ENCODE measurements at regions of chr1 and their contacts with region 1.

Region 1: DNA sequence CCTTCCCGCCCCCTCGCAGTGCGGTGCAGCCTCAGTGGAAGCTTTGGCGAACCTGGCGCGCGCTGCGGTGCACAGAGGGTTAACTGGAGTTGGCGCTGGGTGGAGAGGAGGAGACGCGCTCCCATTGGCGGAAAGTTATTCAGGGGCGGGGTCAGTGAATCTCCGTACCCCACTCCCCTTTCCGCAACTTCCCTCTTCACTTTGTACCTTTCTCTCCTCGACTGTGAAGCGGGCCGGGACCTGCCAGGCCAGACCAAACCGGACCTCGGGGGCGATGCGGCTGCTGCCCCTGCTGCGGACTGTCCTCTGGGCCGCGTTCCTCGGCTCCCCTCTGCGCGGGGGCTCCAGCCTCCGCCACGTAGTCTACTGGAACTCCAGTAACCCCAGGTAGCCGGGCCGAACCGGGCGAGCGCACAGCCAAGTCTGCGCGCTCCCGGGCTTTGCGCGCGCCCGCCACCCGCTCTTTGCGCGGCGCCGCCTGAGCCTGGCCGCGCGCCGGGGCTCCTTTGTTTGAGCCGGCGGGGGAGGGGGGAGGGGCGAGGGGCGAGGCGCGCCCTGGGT is at the start of gene EFNA4:
- DNase-seq: peak; percentile 94
- ATAC-seq: peak; percentile 84
- H3K4me3 ChIP-seq: peak within 1 kb of the TSS; percentile 68 to 78 (median 74)
- H3K4me3 Mint-ChIP-seq: peak within 1 kb of the TSS; percentile 94
- H3K27ac ChIP-seq: peak within 1 kb of the TSS; percentile 25 to 55
- H3K27ac Mint-ChIP-seq: peak within 1 kb of the TSS; percentile 87
- H3K4me1 ChIP-seq: peaks cover 27 to 50% of the 10 kb centered on the region in 2 donors
- H3K4me1 Mint-ChIP-seq: peaks cover 47% of the 10 kb centered on the region
- H3K27me3 ChIP-seq: peaks cover 0 to 3% (median 0%) of the 10 kb centered on the region in 4 experiments
- H3K27me3 Mint-ChIP-seq: no peaks in the 10 kb centered on the region
- CTCF ChIP-seq: no peak
- total RNA-seq, gene EFNA4: 8.4 and 9.9 TPM in 2 replicates

Region 2: DNA sequence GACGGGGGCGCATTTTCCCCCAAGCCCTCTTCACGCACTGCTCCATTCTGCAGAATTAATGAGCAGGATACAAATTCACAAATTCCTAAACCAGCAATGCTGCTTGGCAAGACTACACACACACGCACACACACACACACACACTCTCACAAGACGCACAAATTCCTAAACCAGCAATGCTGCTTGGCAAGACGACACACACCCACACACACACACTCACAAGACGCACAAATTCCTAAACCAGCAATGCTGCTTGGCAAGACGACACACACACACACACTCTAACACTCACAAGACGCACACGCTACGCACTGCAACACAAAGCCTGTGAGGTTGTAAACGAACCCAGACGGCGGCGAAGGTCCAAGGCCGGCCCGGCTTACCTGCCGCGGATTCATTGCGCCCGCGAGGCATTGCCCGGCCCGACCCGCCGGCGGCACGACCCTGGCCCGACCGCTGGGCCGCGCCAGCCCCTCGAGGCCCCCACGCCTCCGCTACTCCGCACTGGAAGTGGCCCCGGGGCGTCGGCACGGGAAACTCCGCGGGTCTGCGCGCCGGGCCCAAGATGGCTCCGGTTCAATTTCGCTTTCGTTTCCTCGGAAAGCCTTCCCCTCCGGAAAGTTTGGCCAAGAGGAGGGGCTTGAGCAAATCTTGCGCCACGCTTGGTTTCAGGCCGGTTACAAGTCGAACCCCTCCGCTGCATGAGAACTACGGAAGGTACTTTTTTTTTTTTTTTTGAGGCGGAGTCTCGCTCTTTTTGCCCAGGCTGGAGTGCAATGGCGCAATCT is 455.8 kb before region 1 on chr1 and contains the start of gene ADAR:
- CTCF ChIA-PET with region 1: no interaction called
- POLR2A ChIA-PET with region 1: no interaction called
- intact Hi-C with region 1: loop called (anchors 5 kb)
- DNase-seq: peak; percentile 96
- ATAC-seq: peak; percentile 92
- H3K4me3 ChIP-seq: peak within 1 kb of the TSS; percentile 83 to 96 (median 93)
- H3K4me3 Mint-ChIP-seq: peak within 1 kb of the TSS; percentile 98
- H3K27ac ChIP-seq: peak within 1 kb of the TSS; percentile 86 to 97
- H3K27ac Mint-ChIP-seq: peak within 1 kb of the TSS; percentile 96
- H3K4me1 ChIP-seq: peaks cover 50 to 60% of the 10 kb centered on the region in 2 donors
- H3K4me1 Mint-ChIP-seq: peaks cover 61% of the 10 kb centered on the region
- H3K27me3 ChIP-seq: no peaks in the 10 kb centered on the region
- H3K27me3 Mint-ChIP-seq: no peaks in the 10 kb centered on the region
- CTCF ChIP-seq: no peak
- total RNA-seq, gene ADAR: 221 and 241 TPM in 2 replicates

Region 3: GRCh38 chr1:154878371-154879022 is 185.1 kb before region 1 on chr1:
- CTCF ChIA-PET with region 1: interaction called, 7 read pairs
- POLR2A ChIA-PET with region 1: no interaction called
- intact Hi-C with region 1: loop called (anchors 1 kb)
- DNase-seq: peak; percentile 78
- ATAC-seq: peak; percentile 93
- H3K4me3 ChIP-seq: no peak overlapping the region
- H3K4me3 Mint-ChIP-seq: no peak overlapping the region
- H3K27ac ChIP-seq: no peak overlapping the region
- H3K27ac Mint-ChIP-seq: no peak overlapping the region
- H3K4me1 ChIP-seq: peaks cover 0 to 2% of the 10 kb centered on the region in 2 donors
- H3K4me1 Mint-ChIP-seq: no peaks in the 10 kb centered on the region
- H3K27me3 ChIP-seq: no peaks in the 10 kb centered on the region
- H3K27me3 Mint-ChIP-seq: no peaks in the 10 kb centered on the region
- CTCF ChIP-seq: peak; percentile 89

Region 4: DNA sequence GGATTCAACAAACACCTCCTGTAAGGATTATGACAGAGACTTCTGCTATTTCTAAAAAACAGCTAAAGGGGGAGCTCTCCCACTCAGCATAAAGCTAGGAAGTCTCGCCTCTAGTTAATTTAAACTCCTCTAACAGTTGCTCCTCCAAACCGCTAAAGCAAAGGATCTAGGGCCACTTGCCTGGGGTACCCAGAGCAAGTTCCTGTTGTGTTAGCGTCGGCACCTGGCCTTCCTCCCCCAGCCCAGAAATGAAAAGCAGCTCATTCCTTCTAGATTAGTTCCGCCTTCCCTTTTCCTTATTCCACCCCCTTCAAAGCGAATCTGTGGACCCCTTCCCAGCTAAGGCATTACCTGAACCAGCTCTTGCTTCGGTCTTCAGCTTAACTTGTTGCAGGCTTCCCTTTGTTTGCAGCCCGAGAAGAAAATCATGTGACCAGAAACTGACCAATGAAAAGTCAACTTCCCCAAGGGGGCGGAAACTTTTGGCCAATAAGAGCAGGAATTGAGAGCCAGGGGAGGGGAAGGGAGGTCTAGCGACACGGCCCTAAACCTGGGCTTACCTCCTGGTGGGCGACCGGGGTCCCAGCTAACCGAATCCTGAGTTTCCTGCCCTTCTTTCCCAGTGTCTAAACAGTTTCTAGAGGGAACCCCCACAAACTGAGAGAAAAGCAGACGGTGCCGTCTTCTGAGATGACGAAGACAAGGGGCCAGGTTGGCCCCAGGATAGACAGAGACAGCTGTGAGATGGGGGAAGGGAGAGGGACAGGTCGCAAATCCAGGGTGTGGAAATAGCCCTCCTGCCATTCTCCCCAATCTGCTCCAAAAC is 107.7 kb before region 1 on chr1 and contains the start of gene PBXIP1:
- CTCF ChIA-PET with region 1: interaction called, 13 read pairs
- POLR2A ChIA-PET with region 1: interaction called, 3 read pairs
- intact Hi-C with region 1: loop called (anchors 2 kb)
- DNase-seq: peak; percentile 94
- ATAC-seq: peak; percentile 68
- H3K4me3 ChIP-seq: peak within 1 kb of the TSS; percentile 71 to 97 (median 83)
- H3K4me3 Mint-ChIP-seq: peak within 1 kb of the TSS; percentile 92
- H3K27ac ChIP-seq: peak within 1 kb of the TSS; percentile 99
- H3K27ac Mint-ChIP-seq: peak within 1 kb of the TSS; percentile 96
- H3K4me1 ChIP-seq: peaks cover 59 to 68% of the 10 kb centered on the region in 2 donors
- H3K4me1 Mint-ChIP-seq: peaks cover 72% of the 10 kb centered on the region
- H3K27me3 ChIP-seq: no peaks in the 10 kb centered on the region
- H3K27me3 Mint-ChIP-seq: no peaks in the 10 kb centered on the region
- CTCF ChIP-seq: peak; percentile 39
- total RNA-seq, gene PBXIP1: 212 and 219 TPM in 2 replicates

Region 5: DNA sequence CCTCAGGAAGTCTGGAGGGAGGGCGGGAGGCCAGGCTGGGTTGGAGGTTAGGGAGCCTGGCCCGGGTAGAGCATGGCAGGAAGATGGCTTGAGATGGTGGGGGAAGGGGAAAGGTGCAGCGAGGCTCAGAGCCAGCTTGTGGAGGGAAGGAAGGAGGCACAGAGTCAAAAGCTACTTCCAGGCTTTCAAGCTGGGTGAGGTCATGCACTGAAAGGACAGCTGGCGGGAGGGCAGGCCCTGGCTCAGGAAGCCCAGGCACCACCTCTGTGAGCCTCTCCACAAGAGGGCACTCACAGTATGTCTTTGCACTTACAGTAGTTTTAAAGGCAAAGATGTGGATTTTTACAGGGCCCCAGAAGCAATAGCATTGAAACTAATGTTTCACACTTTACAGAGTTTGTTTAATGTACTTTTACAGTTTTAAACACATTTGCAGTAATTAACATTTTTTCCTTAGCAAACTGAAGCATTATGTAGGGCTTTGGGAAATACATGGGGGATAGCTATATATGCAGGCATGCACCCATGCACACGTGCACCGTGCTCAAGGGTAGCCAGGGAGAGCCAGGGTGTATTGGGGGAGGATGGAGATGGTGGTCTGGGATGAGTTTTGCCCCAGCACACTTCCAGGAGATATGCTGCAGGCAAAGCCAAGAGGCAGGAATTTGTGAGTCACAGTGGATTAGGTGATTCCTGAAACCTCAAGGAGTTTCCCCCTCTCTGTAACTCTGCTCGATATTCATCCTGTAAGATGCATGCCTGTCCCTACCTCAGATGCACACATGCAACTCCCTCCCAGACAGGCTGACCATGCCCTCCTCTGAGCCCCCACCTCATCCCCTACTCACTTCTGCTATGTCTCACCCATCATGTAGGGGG is 18.6 kb before region 1 on chr1:
- CTCF ChIA-PET with region 1: interaction called, 370 read pairs
- POLR2A ChIA-PET with region 1: interaction called, 8 read pairs
- intact Hi-C with region 1: loop called (anchors 1 kb)
- DNase-seq: peak; percentile 76
- ATAC-seq: peak; percentile 92
- H3K4me3 ChIP-seq: no peak overlapping the region
- H3K4me3 Mint-ChIP-seq: peak overlapping the region; percentile 30
- H3K27ac ChIP-seq: no peak overlapping the region
- H3K27ac Mint-ChIP-seq: peak overlapping the region; percentile 54
- H3K4me1 ChIP-seq: peaks cover 0 to under 1% of the 10 kb centered on the region in 2 donors
- H3K4me1 Mint-ChIP-seq: peaks cover 10% of the 10 kb centered on the region
- H3K27me3 ChIP-seq: no peaks in the 10 kb centered on the region
- H3K27me3 Mint-ChIP-seq: peaks cover 3% of the 10 kb centered on the region
- CTCF ChIP-seq: peak; percentile 63

Region 6: GRCh38 chr1:155084722-155085503 is 21.3 kb after region 1 on chr1:
- CTCF ChIA-PET with region 1: interaction called, 184 read pairs
- POLR2A ChIA-PET with region 1: interaction called, 18 read pairs
- intact Hi-C with region 1: loop called (anchors 1 kb)
- DNase-seq: peak; percentile 97
- ATAC-seq: peak; percentile 73
- H3K4me3 ChIP-seq: peak overlapping the region; percentile 48 to 80 (median 76)
- H3K4me3 Mint-ChIP-seq: peak overlapping the region; percentile 91
- H3K27ac ChIP-seq: peak overlapping the region; percentile 77 to 79
- H3K27ac Mint-ChIP-seq: peak overlapping the region; percentile 93
- H3K4me1 ChIP-seq: peaks cover 59 to 62% of the 10 kb centered on the region in 2 donors
- H3K4me1 Mint-ChIP-seq: peaks cover 48% of the 10 kb centered on the region
- H3K27me3 ChIP-seq: peaks cover 0 to 46% (median 38%) of the 10 kb centered on the region in 4 experiments
- H3K27me3 Mint-ChIP-seq: peaks cover 30% of the 10 kb centered on the region
- CTCF ChIP-seq: peak; percentile 87